ENCODE measurements at regions of chr21 and their contacts with region 1.

Region 1: DNA sequence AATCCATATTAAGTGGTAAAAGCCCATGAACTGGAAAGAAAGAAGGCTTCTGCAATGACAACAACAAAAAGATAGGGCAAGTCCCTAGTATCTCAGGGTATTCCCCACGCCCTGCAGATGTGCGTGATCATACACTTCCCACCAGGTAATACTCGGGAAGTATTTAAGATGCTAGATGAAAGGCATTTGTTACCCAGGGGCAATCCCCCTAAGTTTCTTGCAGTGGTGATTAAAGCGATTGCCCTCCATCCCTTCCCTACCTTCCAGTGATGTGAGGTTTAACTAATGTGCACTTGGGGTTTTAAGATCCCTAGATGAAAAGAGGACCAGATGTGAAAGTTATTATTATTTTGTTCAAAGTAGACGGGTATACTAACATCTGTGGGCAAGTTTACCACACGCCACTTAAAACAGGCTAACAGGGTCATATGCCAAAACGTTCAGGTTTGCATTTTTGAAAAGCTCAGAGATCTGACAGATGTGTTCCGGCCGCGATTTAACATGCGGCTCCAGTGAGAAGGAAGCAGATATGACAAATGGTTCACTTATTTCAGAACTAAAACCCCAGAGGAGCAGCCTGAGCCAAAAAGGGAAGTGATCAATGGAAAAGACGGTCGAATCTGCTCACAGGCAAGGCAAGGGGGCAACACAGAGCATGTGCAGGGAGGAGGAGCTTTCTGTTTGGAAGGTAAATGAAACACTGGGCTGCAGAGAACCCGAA is 17.4 kb downstream of the TIAM1 start:
- DNase-seq: peak; percentile 82
- ATAC-seq: peak; percentile 90
- H3K4me3 Mint-ChIP-seq: peak overlapping the region; percentile 53
- H3K27ac Mint-ChIP-seq: peak overlapping the region; percentile 86
- H3K4me1 Mint-ChIP-seq: peaks cover 24% of the 10 kb centered on the region
- H3K27me3 Mint-ChIP-seq: no peaks in the 10 kb centered on the region
- CTCF ChIP-seq: no peak

Region 2: DNA sequence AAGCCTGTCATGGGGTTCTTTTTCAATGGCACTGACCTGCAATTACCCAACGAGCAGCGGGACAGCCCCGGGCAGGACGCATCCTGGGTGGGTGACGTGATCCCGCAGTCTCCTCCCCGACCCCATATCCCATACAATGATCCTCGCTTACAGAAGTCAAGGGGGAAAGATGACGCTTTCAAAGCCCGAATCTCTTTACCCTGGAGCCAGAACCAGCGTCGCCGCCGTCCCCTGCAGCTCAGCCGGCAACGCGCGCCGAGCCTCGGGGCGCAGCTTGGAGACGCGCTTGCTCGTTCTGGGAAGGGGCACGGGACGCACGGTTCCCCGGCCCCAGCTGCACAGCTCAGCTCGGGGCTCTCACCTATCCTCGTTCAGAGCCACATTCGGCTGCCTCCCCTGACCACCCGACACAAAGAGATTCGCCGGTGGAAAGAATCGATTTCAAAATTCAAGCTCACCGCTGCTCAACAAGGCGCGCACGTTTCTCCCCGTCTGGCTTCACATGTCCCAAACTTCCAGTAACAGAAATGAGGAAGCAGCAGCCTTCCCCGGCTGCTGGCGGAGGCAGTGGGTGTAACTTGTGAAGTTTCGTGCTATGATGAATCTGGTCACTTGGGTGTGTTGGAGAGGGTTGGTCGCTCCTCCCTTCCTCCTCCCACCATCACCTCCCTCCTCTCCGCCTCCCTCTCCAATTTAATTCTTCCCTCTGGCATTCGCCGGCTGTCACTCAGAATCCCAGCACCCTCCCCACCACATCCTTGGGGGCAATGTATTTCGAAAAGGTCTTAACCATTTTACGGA is 17.2 kb after region 1 on chr21 and contains the start of gene TIAM1:
- CTCF ChIA-PET with region 1: interaction called, 8 read pairs
- POLR2A ChIA-PET with region 1: interaction called, 12 read pairs
- intact Hi-C with region 1: no loop called
- DNase-seq: peak; percentile 47
- ATAC-seq: peak; percentile 73
- H3K4me3 Mint-ChIP-seq: peak within 1 kb of the TSS; percentile 84
- H3K27ac Mint-ChIP-seq: peak within 1 kb of the TSS; percentile 80
- H3K4me1 Mint-ChIP-seq: peaks cover 47% of the 10 kb centered on the region
- H3K27me3 Mint-ChIP-seq: peaks cover 3% of the 10 kb centered on the region
- CTCF ChIP-seq: no peak
- total RNA-seq, gene TIAM1: 34.9 to 38.5 TPM

Region 3: DNA sequence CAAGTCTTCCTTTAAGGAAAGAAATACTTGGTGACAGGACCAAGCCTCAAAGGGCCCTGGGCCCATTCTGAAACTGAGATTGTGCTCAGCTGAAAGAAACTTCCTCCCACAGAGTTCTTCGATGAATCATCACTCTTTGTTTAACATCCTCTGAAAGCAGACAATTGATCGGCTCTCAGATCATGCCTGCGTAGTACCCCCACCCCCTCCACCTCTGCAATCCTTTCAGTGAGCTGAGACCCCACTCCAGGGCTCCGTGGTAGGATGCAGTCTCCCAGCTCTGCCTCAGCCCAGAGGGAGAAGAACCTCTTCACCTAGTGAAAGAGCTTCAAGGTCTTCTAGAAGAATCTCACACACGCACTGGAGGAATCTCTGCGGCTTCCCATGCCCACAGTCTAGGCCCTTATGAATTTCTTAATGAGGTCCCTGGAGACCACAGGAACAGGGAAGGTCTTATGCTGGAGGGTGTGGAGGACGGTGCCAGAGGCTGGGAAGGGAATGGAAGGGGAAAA is 227.9 kb after region 1 on chr21:
- CTCF ChIA-PET with region 1: no interaction called
- POLR2A ChIA-PET with region 1: no interaction called
- intact Hi-C with region 1: no loop called
- DNase-seq: peak; percentile 66
- ATAC-seq: peak; percentile 24
- H3K4me3 Mint-ChIP-seq: no peak overlapping the region
- H3K27ac Mint-ChIP-seq: no peak overlapping the region
- H3K4me1 Mint-ChIP-seq: peaks cover 40% of the 10 kb centered on the region
- H3K27me3 Mint-ChIP-seq: peaks cover 31% of the 10 kb centered on the region
- CTCF ChIP-seq: no peak

Measured in activated CD8-positive, alpha-beta T cell treated with anti-CD3 and anti-CD28 coated beads for 36 hours (primary cell).